Dorsolateral prefrontal cortex (tissue), 120 donors: ENCODE measurements at regions of chr3 and their contacts with region 1.

Region 1: DNA sequence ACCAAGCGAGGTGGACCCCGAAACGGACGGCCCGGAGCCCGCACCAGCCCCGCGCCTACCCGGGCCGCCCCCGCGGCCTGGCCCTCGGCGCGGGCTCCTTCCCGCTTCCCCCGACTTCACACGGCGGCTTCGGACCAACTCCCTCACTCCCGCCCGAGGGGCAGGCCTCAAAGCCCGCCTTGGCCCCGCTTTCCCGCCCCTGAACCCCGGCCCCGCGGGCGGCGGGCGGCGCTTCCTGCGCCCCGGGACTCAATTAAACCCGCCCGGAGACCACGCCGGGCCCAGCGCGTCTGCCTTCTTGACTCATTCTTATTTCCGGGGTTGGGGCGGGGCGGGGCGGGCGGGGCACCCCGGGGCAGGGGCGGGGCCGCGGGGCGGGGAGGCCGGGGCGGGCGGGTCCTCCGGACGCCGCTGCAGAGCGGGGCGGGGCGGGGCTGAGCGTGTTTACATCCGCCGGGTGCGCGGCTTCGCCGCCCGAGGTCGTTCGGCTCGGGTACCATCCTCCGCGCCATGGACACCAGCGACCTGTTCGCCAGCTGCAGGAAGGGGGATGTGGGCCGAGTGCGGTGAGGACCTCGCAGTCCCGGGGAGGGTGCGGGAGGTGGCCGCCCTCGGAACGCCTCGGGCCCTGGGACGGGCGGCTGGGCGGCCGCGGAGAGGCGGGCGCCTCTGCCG is at the start of gene ABTB1:
- DNase-seq: peak; percentile 67 to 88 (median 75)
- H3K4me3 ChIP-seq: peak within 1 kb of the TSS; percentile 60 to 98 (median 87)
- H3K27ac ChIP-seq: peak within 1 kb of the TSS; percentile 75 to 97 (median 91)
- H3K27me3 ChIP-seq: no peaks in the 10 kb centered on the region
- CTCF ChIP-seq: peak in 3 of 56 donors; percentile 18 to 26 (median 21)
- total RNA-seq, gene ABTB1: 63.6 to 129 (median 87.7) TPM

Region 2: DNA sequence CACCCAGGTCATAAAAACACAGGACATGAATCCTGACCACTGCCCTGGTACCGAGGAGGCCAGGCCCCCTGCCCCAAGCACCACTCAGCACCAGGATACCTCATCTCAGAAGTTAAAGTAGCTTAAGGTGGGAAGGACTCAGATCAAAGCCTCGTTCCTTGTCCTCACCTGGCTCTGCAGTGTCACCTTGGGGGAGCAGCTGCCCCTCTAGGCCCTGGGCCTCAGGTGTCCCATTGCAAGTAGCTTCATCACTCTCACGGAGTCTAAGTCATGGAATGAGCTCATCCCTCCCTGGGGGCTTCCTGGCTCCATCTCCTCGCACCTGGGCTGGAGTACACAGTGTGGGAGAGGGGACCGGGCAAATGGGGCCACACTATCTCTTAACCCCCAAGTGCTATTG is 230.1 kb before region 1 on chr3:
- intact Hi-C with region 1: no loop called
- DNase-seq: peak in 3 of 10 donors; percentile 3 to 15 (median 13)
- H3K4me3 ChIP-seq: no peak overlapping the region
- H3K27ac ChIP-seq: no peak overlapping the region
- H3K27me3 ChIP-seq: no peaks in the 10 kb centered on the region
- CTCF ChIP-seq: no peak

Region 3: GRCh38 chr3:127590593-127591477 is 81.8 kb before region 1 on chr3 and contains the start of gene TPRA1:
- intact Hi-C with region 1: loop called (anchors 5 to 10 kb)
- DNase-seq: peak; percentile 64 to 95 (median 90)
- H3K4me3 ChIP-seq: peak within 1 kb of the TSS; percentile 54 to 99 (median 92)
- H3K27ac ChIP-seq: peak within 1 kb of the TSS; percentile 58 to 96 (median 88)
- H3K27me3 ChIP-seq: no peaks in the 10 kb centered on the region
- CTCF ChIP-seq: peak in 42 of 56 donors; percentile 4 to 65 (median 36)
- total RNA-seq, gene TPRA1: 19.2 to 39.2 (median 24.6) TPM

Region 4: DNA sequence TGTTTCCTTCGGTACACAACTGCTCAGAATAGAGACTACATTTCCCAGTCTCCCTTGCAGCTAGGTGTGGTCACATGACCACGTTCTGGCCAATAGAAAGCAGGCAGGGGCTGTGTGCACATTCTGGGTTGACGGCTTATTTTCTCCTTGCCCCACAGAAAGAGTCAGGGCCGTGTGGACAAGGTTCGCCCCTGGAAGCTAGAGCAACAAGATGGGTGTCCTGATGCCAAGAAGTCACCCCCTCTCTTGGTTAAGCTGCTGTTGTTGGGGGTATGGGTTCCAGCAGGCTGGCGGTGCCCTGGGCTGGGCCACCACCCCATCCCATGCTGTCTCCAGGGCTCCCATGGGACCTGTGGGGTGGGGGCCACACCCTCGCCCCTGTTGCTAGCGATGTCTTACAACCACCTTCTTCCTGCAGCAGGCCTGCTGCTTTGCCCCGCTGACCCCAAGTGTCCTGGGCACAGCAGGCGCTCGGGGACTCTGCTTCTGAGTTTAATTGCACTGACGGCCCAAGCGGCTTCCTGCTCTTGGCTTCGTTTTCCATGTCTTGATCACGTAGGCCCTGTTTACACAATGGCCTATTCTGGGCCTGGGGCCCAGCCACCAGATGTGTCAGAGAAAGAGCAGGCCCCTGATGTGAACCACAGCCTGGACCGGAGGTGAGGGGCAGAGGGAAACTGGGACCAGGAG is 25.0 kb after region 1 on chr3:
- intact Hi-C with region 1: loop called in 1 of 2 experiments (anchors 2 kb)
- DNase-seq: peak; percentile 76 to 92 (median 82)
- H3K4me3 ChIP-seq: peak overlapping the region in 58 of 59 donors; percentile 11 to 68 (median 46)
- H3K27ac ChIP-seq: peak overlapping the region; percentile 71 to 97 (median 91)
- H3K27me3 ChIP-seq: no peaks in the 10 kb centered on the region
- CTCF ChIP-seq: peak in 8 of 56 donors; percentile 5 to 26 (median 18)

Region 5: GRCh38 chr3:127822698-127823425 is 150.2 kb after region 1 on chr3:
- intact Hi-C with region 1: no loop called
- DNase-seq: peak in 5 of 10 donors; percentile 36 to 68 (median 62)
- H3K4me3 ChIP-seq: peak overlapping the region; percentile 54 to 89 (median 79)
- H3K27ac ChIP-seq: peak overlapping the region in 58 of 59 donors; percentile 21 to 94 (median 87)
- H3K27me3 ChIP-seq: no peaks in the 10 kb centered on the region
- CTCF ChIP-seq: peak in 16 of 56 donors; percentile 5 to 51 (median 29)

Region 6: GRCh38 chr3:128112357-128112968 is 439.8 kb after region 1 on chr3:
- intact Hi-C with region 1: no loop called
- DNase-seq: no peak
- H3K4me3 ChIP-seq: no peak overlapping the region
- H3K27ac ChIP-seq: no peak overlapping the region
- H3K27me3 ChIP-seq: no peaks in the 10 kb centered on the region
- CTCF ChIP-seq: no peak